ENCODE measurements at regions of chr6 and their contacts with region 1.

Region 1: DNA sequence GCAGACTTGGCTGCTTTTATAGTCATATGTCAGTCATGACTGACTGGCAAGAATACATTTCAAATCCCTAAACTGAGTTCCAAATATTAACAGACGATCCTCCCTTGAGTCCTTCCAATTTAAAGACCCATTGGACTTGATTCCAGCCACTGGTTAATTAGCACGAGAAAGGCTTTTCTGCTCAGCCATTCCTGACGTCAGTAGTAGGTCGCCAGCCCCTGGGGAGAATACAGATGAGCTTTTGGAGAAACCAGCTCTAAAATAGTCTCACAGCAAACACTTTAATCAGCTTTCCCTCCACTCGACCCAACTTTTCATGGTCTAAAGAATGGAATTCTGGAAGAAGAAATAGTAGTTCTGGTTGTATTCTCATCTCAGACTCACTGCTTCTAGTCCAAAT is 91.6 kb downstream of the SLC22A3 start:
- DNase-seq: peak in 1 of 5 donors; percentile 38
- H3K4me3 ChIP-seq: no peak overlapping the region
- H3K27ac ChIP-seq: no peak overlapping the region
- H3K4me1 ChIP-seq: no peaks in the 10 kb centered on the region
- H3K27me3 ChIP-seq: no peaks in the 10 kb centered on the region
- CTCF ChIP-seq: no peak
- EP300 ChIP-seq: no peak
- POLR2A ChIP-seq: no peak

Region 2: GRCh38 chr6:160156842-160157241 is 282.9 kb before region 1 on chr6:
- intact Hi-C with region 1: loop called in 1 of 4 experiments (anchors 5 kb)
- DNase-seq: no peak
- H3K4me3 ChIP-seq: no peak overlapping the region
- H3K27ac ChIP-seq: no peak overlapping the region
- H3K4me1 ChIP-seq: no peaks in the 10 kb centered on the region
- H3K27me3 ChIP-seq: no peaks in the 10 kb centered on the region
- CTCF ChIP-seq: no peak
- EP300 ChIP-seq: no peak
- POLR2A ChIP-seq: no peak

Region 3: GRCh38 chr6:160386869-160387530 is 52.8 kb before region 1 on chr6:
- intact Hi-C with region 1: no loop called
- DNase-seq: peak in 3 of 5 donors; percentile 51 to 79 (median 77)
- H3K4me3 ChIP-seq: no peak overlapping the region
- H3K27ac ChIP-seq: no peak overlapping the region
- H3K4me1 ChIP-seq: peaks cover 9% of the 10 kb centered on the region
- H3K27me3 ChIP-seq: no peaks in the 10 kb centered on the region
- CTCF ChIP-seq: no peak
- EP300 ChIP-seq: no peak
- POLR2A ChIP-seq: no peak

Measured in ovary (tissue), 10 donors.